ENCODE measurements at regions of chr13 and their contacts with region 1.

Region 1: DNA sequence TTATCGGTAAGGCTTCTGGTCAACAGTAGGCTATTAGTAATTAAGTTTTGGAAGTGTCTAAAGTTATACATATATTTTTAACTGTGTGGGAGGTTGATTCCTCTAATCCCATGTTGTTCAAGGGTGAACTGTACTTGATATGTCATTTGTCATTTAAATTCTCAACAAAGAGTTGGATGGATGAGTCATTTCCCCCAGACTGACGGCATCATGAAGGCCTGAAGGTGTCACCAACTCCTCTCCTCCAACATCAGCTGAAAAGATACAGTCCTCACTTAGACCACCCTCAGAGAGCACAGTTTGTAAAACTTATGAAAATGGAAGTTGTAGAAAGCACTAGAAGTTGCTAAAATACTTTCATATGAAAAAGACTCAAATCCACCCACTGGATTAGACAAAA is 48.8 kb downstream of the DCLK1 start:
- DNase-seq: no peak

Region 2: DNA sequence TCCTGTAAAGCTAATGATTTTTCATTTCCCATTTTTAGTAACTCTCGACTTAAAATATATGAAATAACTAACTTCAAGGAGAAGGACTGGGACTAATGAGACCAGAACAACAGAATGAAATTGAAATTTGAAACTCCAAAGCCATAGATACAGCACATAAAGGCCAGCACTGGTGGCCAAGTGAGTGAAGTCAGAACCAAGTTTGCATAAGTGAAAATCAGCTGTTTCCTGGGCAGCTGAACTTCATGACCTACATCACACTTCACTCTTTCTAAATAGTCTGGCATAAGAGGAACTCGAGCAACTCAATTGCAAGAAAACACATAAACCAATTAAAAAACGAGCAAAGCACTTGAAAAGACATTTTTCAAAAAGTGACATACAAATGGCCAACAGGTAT is 35.7 kb before region 1 on chr13:
- intact Hi-C with region 1: loop called (anchors 2 kb)
- DNase-seq: no peak